ENCODE measurements at regions of chr3 and their contacts with region 1.

Region 1: DNA sequence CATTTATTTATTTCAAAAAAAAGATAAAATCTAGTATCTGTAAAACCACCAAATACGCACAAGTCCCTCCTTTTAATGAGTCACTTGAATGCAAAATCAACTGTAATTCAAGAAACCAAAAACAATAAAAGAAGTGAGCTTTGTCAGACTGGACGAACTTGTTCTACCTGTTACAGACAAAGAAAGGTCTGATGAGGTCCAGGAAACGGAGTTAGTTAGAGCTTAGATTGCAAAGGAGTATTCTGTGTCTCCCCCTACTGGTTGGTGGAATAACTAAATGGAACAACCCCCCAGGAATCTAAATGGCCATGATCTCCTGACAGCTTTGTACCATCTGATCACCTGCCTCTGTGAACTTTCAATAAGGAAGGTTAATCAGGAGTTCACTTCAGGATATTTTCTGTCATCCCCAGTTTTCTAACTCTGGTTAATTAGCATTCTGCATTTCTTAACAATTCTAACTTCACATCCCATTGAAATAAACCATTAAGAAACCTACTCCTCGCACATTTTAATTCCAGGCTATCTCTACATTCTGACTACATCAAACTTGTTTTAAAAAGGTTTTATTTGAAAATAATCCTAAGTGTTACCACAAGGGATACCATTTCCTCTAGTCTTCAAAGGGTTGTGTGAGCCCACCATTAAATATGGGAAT is 333.0 kb upstream of the SATB1 start:
- DNase-seq: peak; percentile 90
- H3K4me3 ChIP-seq: no peak overlapping the region
- H3K27ac ChIP-seq: no peak overlapping the region
- H3K4me1 ChIP-seq: peaks cover 24% of the 10 kb centered on the region
- CTCF ChIP-seq: peak; percentile 97

Region 2: GRCh38 chr3:18424729-18425640 is 333.2 kb before region 1 on chr3 and contains the start of gene SATB1:
- CTCF ChIA-PET with region 1: no interaction called
- POLR2A ChIA-PET with region 1: interaction called, 3 read pairs
- intact Hi-C with region 1: loop called (anchors 2 kb)
- DNase-seq: peak; percentile 62
- H3K4me3 ChIP-seq: peak within 1 kb of the TSS; percentile 81
- H3K27ac ChIP-seq: no peak within 1 kb of the TSS
- H3K4me1 ChIP-seq: peaks cover 12% of the 10 kb centered on the region
- CTCF ChIP-seq: no peak
- total RNA-seq, gene SATB1: 5.6 and 8.7 TPM in 2 replicates

Region 3: GRCh38 chr3:18499301-18499700 is 258.9 kb before region 1 on chr3:
- CTCF ChIA-PET with region 1: no interaction called
- POLR2A ChIA-PET with region 1: no interaction called
- intact Hi-C with region 1: loop called (anchors 5 kb)
- DNase-seq: peak; percentile 90
- H3K4me3 ChIP-seq: peak overlapping the region; percentile 40
- H3K27ac ChIP-seq: peak overlapping the region; percentile 75
- H3K4me1 ChIP-seq: peaks cover 35% of the 10 kb centered on the region
- CTCF ChIP-seq: no peak

Region 4: GRCh38 chr3:18559331-18559842 is 198.8 kb before region 1 on chr3:
- CTCF ChIA-PET with region 1: interaction called, 21 read pairs
- POLR2A ChIA-PET with region 1: interaction called, 4 read pairs
- intact Hi-C with region 1: loop called (anchors 1 kb)
- DNase-seq: peak; percentile 70
- H3K4me3 ChIP-seq: no peak overlapping the region
- H3K27ac ChIP-seq: no peak overlapping the region
- H3K4me1 ChIP-seq: no peaks in the 10 kb centered on the region
- CTCF ChIP-seq: peak; percentile 89

Region 5: DNA sequence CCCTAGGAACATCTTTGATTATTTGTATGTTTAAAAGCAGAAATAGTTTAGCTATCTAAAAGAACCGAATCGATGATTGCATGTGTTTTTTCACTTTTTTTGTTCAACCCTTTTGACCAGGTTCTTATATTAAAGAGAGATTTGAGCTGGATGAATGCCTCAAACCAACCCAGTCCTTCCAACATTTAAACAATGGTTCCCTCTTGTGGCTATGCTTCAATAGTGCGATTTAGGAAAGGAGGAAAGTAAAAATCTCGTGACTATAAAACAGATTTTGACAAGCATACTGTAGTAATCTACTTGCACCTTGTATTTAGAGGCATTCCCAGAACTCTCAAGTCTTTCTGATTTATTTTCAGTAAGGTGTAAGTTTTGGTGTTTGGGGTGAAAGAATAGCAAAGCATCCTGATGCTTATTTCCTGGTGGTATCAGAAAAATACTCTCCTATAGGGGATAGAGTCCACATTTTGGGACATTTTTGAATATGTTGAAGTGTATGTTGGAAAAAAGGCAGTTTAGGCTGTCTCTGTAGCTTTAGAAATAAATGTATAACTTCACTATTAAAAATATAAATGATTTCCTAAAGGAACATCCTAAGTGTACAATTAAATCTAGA is 230.5 kb after region 1 on chr3:
- CTCF ChIA-PET with region 1: no interaction called
- POLR2A ChIA-PET with region 1: interaction called, 3 read pairs
- intact Hi-C with region 1: loop called (anchors 1 kb)
- DNase-seq: peak; percentile 68
- H3K4me3 ChIP-seq: no peak overlapping the region
- H3K27ac ChIP-seq: no peak overlapping the region
- H3K4me1 ChIP-seq: no peaks in the 10 kb centered on the region
- CTCF ChIP-seq: peak; percentile 96

Measured in OCI-LY7 (cell line).